IMR-90 (cell line): ENCODE measurements at regions of chr3 and their contacts with region 1.

Region 1: GRCh38 chr3:125011941-125012340 is 43.9 kb downstream of the HEG1 start:
- DNase-seq: peak; percentile 40
- ATAC-seq: peak; percentile 22; the same call in 1 of the 2 replicates
- H3K4me3 ChIP-seq: no peak overlapping the region
- H3K27ac ChIP-seq: no peak overlapping the region
- H3K4me1 ChIP-seq: peaks cover 4% of the 10 kb centered on the region; the same call in 1 of the 2 replicates
- H3K27me3 ChIP-seq: no peaks in the 10 kb centered on the region
- CTCF ChIP-seq: no peak
- POLR2A ChIP-seq: no peak
- RAD21 ChIP-seq: no peak

Region 2: DNA sequence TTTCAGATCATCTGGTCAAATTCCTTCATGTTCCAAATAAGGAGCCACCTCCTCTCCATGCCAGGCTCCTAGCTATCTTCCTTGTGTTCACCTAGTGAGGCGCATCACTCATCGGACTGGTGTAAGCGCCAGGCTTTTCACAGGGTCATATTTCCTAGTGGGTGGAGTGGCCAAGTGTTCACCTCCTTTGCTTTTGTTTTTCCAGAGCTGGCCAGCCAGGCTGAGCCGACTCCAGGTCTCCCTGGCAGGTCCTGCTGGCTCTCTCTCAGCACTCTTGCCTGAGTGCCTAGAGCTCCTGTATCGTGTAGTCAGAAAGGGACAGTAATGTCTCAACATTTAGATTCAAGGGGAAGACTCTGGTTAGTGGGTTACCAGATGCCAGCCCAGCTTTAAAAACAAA is 12.9 kb after region 1 on chr3:
- CTCF ChIA-PET with region 1: no interaction called
- POLR2A ChIA-PET with region 1: no interaction called
- dilution Hi-C with region 1: no loop called
- in situ Hi-C with region 1: no loop called
- intact Hi-C with region 1: no loop called
- DNase-seq: no peak
- ATAC-seq: no peak
- H3K4me3 ChIP-seq: no peak overlapping the region
- H3K27ac ChIP-seq: no peak overlapping the region
- H3K4me1 ChIP-seq: peaks cover 2% of the 10 kb centered on the region; the same call in 1 of the 2 replicates
- H3K27me3 ChIP-seq: no peaks in the 10 kb centered on the region
- CTCF ChIP-seq: no peak
- POLR2A ChIP-seq: no peak
- RAD21 ChIP-seq: no peak

Region 3: GRCh38 chr3:125594581-125595011 is 582.7 kb after region 1 on chr3:
- CTCF ChIA-PET with region 1: no interaction called
- POLR2A ChIA-PET with region 1: interaction called, 12 read pairs
- dilution Hi-C with region 1: no loop called
- in situ Hi-C with region 1: no loop called
- intact Hi-C with region 1: no loop called
- DNase-seq: peak; percentile 22
- ATAC-seq: no peak; the same call in 1 of the 2 replicates
- H3K4me3 ChIP-seq: peak overlapping the region; percentile 84
- H3K27ac ChIP-seq: peak overlapping the region; percentile 75
- H3K4me1 ChIP-seq: no peaks in the 10 kb centered on the region; the same call in none of the 2 replicates
- H3K27me3 ChIP-seq: no peaks in the 10 kb centered on the region
- CTCF ChIP-seq: no peak
- POLR2A ChIP-seq: no peak
- RAD21 ChIP-seq: no peak

Region 4: GRCh38 chr3:126498929-126499328 is 1487.0 kb after region 1 on chr3:
- CTCF ChIA-PET with region 1: no interaction called
- POLR2A ChIA-PET with region 1: no interaction called
- dilution Hi-C with region 1: no loop called
- in situ Hi-C with region 1: no loop called
- intact Hi-C with region 1: no loop called
- DNase-seq: no peak
- ATAC-seq: no peak
- H3K4me3 ChIP-seq: no peak overlapping the region
- H3K27ac ChIP-seq: no peak overlapping the region
- H3K4me1 ChIP-seq: no peaks in the 10 kb centered on the region
- H3K27me3 ChIP-seq: peaks cover 17% of the 10 kb centered on the region; the same call in 1 of the 2 replicates
- CTCF ChIP-seq: no peak
- POLR2A ChIP-seq: no peak
- RAD21 ChIP-seq: no peak